ENCODE measurements at regions of chr18 and their contacts with region 1.

Region 1: DNA sequence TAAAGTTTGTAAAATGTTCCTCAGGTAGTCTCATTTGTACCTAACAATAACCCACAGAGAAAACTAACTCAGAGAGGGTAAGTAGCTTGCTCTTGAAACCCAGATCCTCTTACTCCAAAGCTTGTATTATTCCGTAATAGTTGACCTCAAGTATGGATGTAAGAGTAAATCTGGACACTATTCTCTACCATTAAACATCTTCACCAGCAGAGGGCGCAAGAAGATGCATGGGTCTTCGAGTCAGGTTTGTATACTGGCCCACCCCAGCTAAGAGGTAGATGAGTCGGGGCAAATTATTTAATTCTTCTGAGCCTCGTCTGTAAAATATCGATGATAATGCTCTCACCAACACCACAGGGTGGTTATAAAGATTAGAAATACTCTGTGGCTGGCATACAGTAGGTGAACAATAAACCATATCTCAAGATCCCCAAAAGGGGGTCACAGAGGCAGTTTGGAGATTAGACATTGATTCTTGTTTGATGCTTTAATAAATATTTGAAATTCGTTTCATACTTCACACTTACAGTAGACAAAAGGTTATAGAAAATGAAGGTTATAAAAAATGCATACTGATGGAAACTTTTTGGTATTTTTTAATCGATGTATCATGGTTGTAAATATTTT is 3.5 kb upstream of the CABLES1 start:
- DNase-seq: peak; percentile 81
- CTCF ChIP-seq: peak; percentile 74

Region 2: GRCh38 chr18:23354625-23355024 is 222.8 kb after region 1 on chr18:
- in situ Hi-C with region 1: loop called (anchors 5 kb)
- DNase-seq: no peak
- CTCF ChIP-seq: no peak

Region 3: GRCh38 chr18:23387265-23387664 is 255.5 kb after region 1 on chr18:
- in situ Hi-C with region 1: no loop called
- DNase-seq: no peak
- CTCF ChIP-seq: no peak

Measured in GM13976 (cell line).